Ascending aorta (tissue), 2 donors: ENCODE measurements at regions of chr10 and their contacts with region 1.

Region 1: GRCh38 chr10:101042667-101043355 is 11.8 kb downstream of the SFXN3 start:
- DNase-seq: peak; percentile 96 to 99
- H3K4me3 ChIP-seq: peak overlapping the region; percentile 56 to 64
- H3K27ac ChIP-seq: peak overlapping the region; percentile 87 to 93
- H3K4me1 ChIP-seq: peaks cover 0 to 18% of the 10 kb centered on the region in 2 donors
- H3K27me3 ChIP-seq: peaks cover 6% of the 10 kb centered on the region
- CTCF ChIP-seq: no peak

Region 2: GRCh38 chr10:101031128-101031795 is 11.5 kb before region 1 on chr10 and contains the starts of genes PDZD7 and SFXN3:
- intact Hi-C with region 1: loop called (anchors 1 kb)
- DNase-seq: peak; percentile 80 to 97
- H3K4me3 ChIP-seq: peak within 1 kb of the TSS; percentile 72 to 92
- H3K27ac ChIP-seq: peak within 1 kb of the TSS; percentile 99
- H3K4me1 ChIP-seq: peaks cover 20 to 30% of the 10 kb centered on the region in 2 donors
- H3K27me3 ChIP-seq: no peaks in the 10 kb centered on the region
- CTCF ChIP-seq: no peak
- total RNA-seq, gene PDZD7: 0.53 TPM
- total RNA-seq, gene SFXN3: 72.4 TPM